B cell (primary cell): ENCODE measurements at regions of chr1 and their contacts with region 1.

Region 1: DNA sequence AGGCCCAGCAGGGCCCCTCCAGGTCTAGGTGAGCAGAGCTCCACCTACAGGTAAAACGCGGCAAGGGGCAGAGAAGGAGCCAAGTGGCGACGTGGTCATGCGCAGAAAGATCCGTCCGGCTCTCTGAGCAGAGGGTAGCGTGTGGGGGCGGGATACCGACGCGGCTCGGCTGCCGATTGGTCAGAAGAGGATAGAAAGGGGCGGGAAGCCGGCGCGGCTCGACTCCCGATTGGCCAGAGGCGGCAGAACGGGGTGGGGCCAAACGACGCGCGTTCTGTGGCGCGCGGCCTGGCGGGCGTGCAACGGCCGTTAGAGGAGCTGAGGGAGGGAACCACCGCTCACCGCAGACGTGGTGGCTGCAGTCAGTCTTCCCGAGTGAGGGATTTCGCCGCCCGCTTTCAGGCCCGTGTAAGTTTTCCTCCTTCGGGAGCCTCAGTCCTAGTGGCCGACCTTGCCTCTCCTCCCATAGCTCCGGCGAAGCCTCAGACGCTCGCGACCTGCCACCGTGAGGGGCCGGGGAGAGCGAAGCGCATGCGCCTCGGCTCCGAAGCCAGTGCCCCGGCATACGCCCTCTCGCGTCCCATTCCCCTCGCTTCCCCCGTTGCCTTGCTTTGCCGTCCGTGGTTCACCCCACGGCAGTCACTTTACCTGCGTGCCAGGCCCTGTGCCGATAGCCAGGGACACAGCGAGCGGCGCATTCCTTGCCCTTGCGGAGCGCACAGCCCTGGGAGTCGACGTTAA is at the start of gene CEP85:
- DNase-seq: peak; percentile 100
- ATAC-seq: peak; percentile 87
- H3K4me3 ChIP-seq: peak within 1 kb of the TSS; percentile 62 to 93 (median 81)
- H3K4me3 Mint-ChIP-seq: peak within 1 kb of the TSS; percentile 97
- H3K27ac ChIP-seq: peak within 1 kb of the TSS; percentile 59 to 86
- H3K27ac Mint-ChIP-seq: peak within 1 kb of the TSS; percentile 95
- H3K4me1 ChIP-seq: peaks cover 11 to 16% of the 10 kb centered on the region in 2 donors
- H3K4me1 Mint-ChIP-seq: peaks cover 27% of the 10 kb centered on the region
- H3K27me3 ChIP-seq: no peaks in the 10 kb centered on the region
- H3K27me3 Mint-ChIP-seq: no peaks in the 10 kb centered on the region
- CTCF ChIP-seq: peak; percentile 90
- total RNA-seq, gene CEP85: 16.2 and 16.9 TPM in 2 replicates

Region 2: DNA sequence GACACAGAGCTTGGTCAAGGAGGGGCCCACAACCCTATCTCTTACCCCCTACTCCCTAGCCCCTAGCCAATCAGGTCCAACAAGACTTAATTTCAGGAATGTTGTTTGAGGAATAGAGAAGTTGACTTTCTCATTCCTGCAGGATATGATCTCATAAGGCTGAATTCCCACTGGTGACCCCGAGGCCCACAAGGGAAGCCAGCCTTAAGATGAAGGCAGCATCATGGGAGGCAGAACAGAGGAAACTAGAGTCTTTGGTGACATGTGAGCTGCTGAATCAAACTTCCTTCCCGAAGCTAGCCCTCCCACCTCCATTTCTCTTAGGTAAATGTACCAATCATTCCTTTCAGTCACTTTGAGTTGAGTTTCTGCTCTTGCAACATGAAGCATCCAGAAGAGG is 131.5 kb before region 1 on chr1:
- CTCF ChIA-PET with region 1: interaction called, 4 read pairs
- POLR2A ChIA-PET with region 1: no interaction called
- intact Hi-C with region 1: loop called (anchors 1 kb)
- DNase-seq: no peak
- ATAC-seq: no peak
- H3K4me3 ChIP-seq: no peak overlapping the region
- H3K4me3 Mint-ChIP-seq: no peak overlapping the region
- H3K27ac ChIP-seq: no peak overlapping the region
- H3K27ac Mint-ChIP-seq: no peak overlapping the region
- H3K4me1 ChIP-seq: no peaks in the 10 kb centered on the region
- H3K4me1 Mint-ChIP-seq: peaks cover 4% of the 10 kb centered on the region
- H3K27me3 ChIP-seq: no peaks in the 10 kb centered on the region
- H3K27me3 Mint-ChIP-seq: peaks cover 17% of the 10 kb centered on the region
- CTCF ChIP-seq: no peak

Region 3: DNA sequence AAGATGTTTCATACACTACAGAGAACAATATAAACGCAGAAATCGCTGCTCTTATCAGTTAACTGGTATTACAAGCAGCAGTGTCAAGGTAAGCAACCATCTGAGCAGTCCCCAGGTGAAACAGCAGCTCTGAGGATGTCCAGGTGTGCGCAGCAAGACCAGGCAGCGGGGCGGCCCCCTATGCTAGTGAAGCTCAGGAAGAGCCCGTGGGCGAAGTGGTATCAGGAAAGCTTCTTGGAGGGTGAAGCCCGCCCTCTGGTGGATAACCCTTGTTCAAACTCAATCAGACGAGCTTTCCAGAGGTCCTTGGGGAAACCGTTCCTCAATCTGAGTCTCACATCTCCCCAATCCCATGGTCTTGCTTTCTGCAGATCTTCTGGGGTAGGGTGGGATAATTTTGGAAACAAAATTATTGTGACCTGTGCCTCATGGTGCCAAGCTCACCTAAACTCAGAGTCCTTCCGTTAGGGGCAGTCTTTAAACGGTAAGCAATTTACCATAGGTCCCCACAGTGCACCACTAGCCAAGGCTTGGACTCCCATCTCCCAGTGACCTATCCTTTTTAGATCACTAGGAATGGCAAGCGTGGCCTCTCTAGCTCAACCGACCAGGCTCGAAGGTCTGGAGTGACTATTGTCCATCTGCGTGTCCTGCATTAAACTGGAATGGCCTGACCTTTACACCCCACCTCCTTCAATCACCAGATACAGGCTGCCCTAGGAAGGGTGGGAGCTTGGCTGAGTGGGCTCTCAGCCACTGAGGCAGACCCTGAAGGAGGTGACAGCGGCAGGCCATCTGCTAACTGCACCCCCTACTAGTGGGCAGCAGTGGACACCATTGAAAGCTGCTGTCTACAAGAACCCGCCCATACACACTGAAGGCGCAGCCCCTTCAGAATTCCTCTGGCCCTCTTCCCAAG is 88.8 kb before region 1 on chr1:
- CTCF ChIA-PET with region 1: interaction called, 15 read pairs
- POLR2A ChIA-PET with region 1: no interaction called
- intact Hi-C with region 1: no loop called
- DNase-seq: peak; percentile 79
- ATAC-seq: peak; percentile 65
- H3K4me3 ChIP-seq: no peak overlapping the region
- H3K4me3 Mint-ChIP-seq: no peak overlapping the region
- H3K27ac ChIP-seq: no peak overlapping the region
- H3K27ac Mint-ChIP-seq: no peak overlapping the region
- H3K4me1 ChIP-seq: peaks cover 4 to 6% of the 10 kb centered on the region in 2 donors
- H3K4me1 Mint-ChIP-seq: peaks cover 3% of the 10 kb centered on the region
- H3K27me3 ChIP-seq: peaks cover 0 to 6% (median 0%) of the 10 kb centered on the region in 4 experiments
- H3K27me3 Mint-ChIP-seq: peaks cover 14% of the 10 kb centered on the region
- CTCF ChIP-seq: peak; percentile 90

Region 4: DNA sequence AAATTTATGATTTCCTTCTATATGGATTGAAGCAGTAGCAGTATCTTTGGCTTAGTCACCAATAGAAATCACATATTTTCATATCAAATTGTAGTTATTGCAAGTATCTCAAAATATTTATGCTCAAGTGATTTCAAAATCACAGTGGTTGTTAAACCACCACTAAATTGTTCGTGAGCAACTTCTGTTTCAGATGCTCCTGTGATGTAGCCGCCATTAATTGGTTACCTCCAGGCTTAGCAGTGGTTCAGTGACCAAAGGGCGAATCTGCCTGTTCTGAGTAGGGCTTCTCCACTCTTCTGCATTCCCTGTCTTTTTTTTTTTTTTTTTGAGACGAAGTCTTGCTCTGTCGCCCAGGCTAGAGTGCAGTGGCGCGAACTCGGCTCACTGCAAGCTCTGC is 58.7 kb before region 1 on chr1:
- CTCF ChIA-PET with region 1: interaction called, 28 read pairs
- POLR2A ChIA-PET with region 1: no interaction called
- intact Hi-C with region 1: no loop called
- DNase-seq: no peak
- ATAC-seq: no peak
- H3K4me3 ChIP-seq: no peak overlapping the region
- H3K4me3 Mint-ChIP-seq: no peak overlapping the region
- H3K27ac ChIP-seq: no peak overlapping the region
- H3K27ac Mint-ChIP-seq: no peak overlapping the region
- H3K4me1 ChIP-seq: peaks cover 6 to 8% of the 10 kb centered on the region in 2 donors
- H3K4me1 Mint-ChIP-seq: peaks cover 7% of the 10 kb centered on the region
- H3K27me3 ChIP-seq: no peaks in the 10 kb centered on the region
- H3K27me3 Mint-ChIP-seq: no peaks in the 10 kb centered on the region
- CTCF ChIP-seq: no peak

Region 5: GRCh38 chr1:26284597-26285360 is 50.7 kb after region 1 on chr1:
- CTCF ChIA-PET with region 1: interaction called, 13 read pairs
- POLR2A ChIA-PET with region 1: interaction called, 17 read pairs
- intact Hi-C with region 1: loop called (anchors 5 kb)
- DNase-seq: peak; percentile 87
- ATAC-seq: peak; percentile 47
- H3K4me3 ChIP-seq: peak overlapping the region in 2 of 5 experiments; percentile 5 to 19
- H3K4me3 Mint-ChIP-seq: peak overlapping the region; percentile 87
- H3K27ac ChIP-seq: peak overlapping the region; percentile 93 to 96
- H3K27ac Mint-ChIP-seq: peak overlapping the region; percentile 97
- H3K4me1 ChIP-seq: peaks cover 79 to 89% of the 10 kb centered on the region in 2 donors
- H3K4me1 Mint-ChIP-seq: peaks cover 88% of the 10 kb centered on the region
- H3K27me3 ChIP-seq: no peaks in the 10 kb centered on the region
- H3K27me3 Mint-ChIP-seq: no peaks in the 10 kb centered on the region
- CTCF ChIP-seq: peak; percentile 77

Region 6: GRCh38 chr1:26363549-26364448 is 129.7 kb after region 1 on chr1:
- CTCF ChIA-PET with region 1: interaction called, 15 read pairs
- POLR2A ChIA-PET with region 1: no interaction called
- intact Hi-C with region 1: no loop called
- DNase-seq: peak; percentile 87
- ATAC-seq: peak; percentile 82
- H3K4me3 ChIP-seq: no peak overlapping the region
- H3K4me3 Mint-ChIP-seq: no peak overlapping the region
- H3K27ac ChIP-seq: no peak overlapping the region
- H3K27ac Mint-ChIP-seq: no peak overlapping the region
- H3K4me1 ChIP-seq: peaks cover 22 to 28% of the 10 kb centered on the region in 2 donors
- H3K4me1 Mint-ChIP-seq: peaks cover 31% of the 10 kb centered on the region
- H3K27me3 ChIP-seq: peaks cover 0 to 36% (median 14%) of the 10 kb centered on the region in 4 experiments
- H3K27me3 Mint-ChIP-seq: peaks cover 28% of the 10 kb centered on the region
- CTCF ChIP-seq: peak; percentile 95

Region 7: DNA sequence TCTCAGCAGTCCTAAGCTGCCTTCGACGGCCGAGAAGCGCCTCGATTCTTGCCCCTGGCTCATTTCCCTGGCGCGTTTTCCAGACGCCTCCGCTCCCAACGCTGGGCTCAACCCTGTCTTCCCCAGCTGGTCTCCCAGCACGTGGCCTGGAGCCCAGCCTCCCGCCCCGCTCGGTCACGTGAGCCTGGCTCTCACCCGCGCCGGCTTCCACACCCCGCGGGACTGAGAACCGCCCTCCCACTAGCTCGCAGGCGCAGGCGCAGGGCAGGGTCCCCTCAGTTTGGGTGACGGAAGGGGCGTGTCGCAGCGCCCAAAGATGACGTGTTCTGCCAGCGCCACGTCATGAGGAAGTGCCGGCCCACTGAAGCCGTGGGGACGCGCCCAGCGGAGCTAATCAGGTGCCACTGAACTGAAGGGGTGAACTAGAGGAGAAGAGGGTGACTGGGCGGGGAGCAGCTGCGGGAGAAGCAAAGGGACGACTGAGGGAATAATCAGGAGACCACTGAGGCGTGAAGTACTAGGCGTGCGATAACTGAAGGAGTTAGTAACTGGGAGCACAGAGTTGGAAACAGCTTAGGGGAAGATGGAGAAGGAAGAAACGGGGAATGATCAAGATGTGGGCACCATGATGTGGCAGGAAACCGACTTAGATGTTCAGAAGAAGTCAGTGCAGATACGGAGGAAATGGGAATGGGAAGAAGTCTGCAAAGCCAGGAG is 198.1 kb after region 1 on chr1 and contains the start of gene DHDDS:
- CTCF ChIA-PET with region 1: interaction called, 5 read pairs
- POLR2A ChIA-PET with region 1: no interaction called
- intact Hi-C with region 1: loop called (anchors 1 kb)
- DNase-seq: peak; percentile 99
- ATAC-seq: peak; percentile 97
- H3K4me3 ChIP-seq: peak within 1 kb of the TSS; percentile 62 to 97 (median 77)
- H3K4me3 Mint-ChIP-seq: peak within 1 kb of the TSS; percentile 95
- H3K27ac ChIP-seq: peak within 1 kb of the TSS; percentile 61 to 86
- H3K27ac Mint-ChIP-seq: peak within 1 kb of the TSS; percentile 93
- H3K4me1 ChIP-seq: peaks cover 15 to 21% of the 10 kb centered on the region in 2 donors
- H3K4me1 Mint-ChIP-seq: peaks cover 20% of the 10 kb centered on the region
- H3K27me3 ChIP-seq: no peaks in the 10 kb centered on the region
- H3K27me3 Mint-ChIP-seq: no peaks in the 10 kb centered on the region
- CTCF ChIP-seq: no peak
- total RNA-seq, gene DHDDS: 54.2 and 61.7 TPM in 2 replicates

Region 8: GRCh38 chr1:26555550-26556510 is 321.8 kb after region 1 on chr1:
- CTCF ChIA-PET with region 1: no interaction called
- POLR2A ChIA-PET with region 1: no interaction called
- intact Hi-C with region 1: no loop called
- DNase-seq: no peak
- ATAC-seq: no peak
- H3K4me3 ChIP-seq: no peak overlapping the region
- H3K4me3 Mint-ChIP-seq: no peak overlapping the region
- H3K27ac ChIP-seq: no peak overlapping the region
- H3K27ac Mint-ChIP-seq: no peak overlapping the region
- H3K4me1 ChIP-seq: no peaks in the 10 kb centered on the region
- H3K4me1 Mint-ChIP-seq: no peaks in the 10 kb centered on the region
- H3K27me3 ChIP-seq: no peaks in the 10 kb centered on the region
- H3K27me3 Mint-ChIP-seq: no peaks in the 10 kb centered on the region
- CTCF ChIP-seq: no peak

Region 9: GRCh38 chr1:26597629-26598039 is 363.6 kb after region 1 on chr1:
- CTCF ChIA-PET with region 1: no interaction called
- POLR2A ChIA-PET with region 1: no interaction called
- intact Hi-C with region 1: no loop called
- DNase-seq: peak; percentile 78
- ATAC-seq: peak; percentile 73
- H3K4me3 ChIP-seq: no peak overlapping the region
- H3K4me3 Mint-ChIP-seq: no peak overlapping the region
- H3K27ac ChIP-seq: no peak overlapping the region
- H3K27ac Mint-ChIP-seq: no peak overlapping the region
- H3K4me1 ChIP-seq: peaks cover 0 to 5% of the 10 kb centered on the region in 2 donors
- H3K4me1 Mint-ChIP-seq: peaks cover 7% of the 10 kb centered on the region
- H3K27me3 ChIP-seq: no peaks in the 10 kb centered on the region
- H3K27me3 Mint-ChIP-seq: no peaks in the 10 kb centered on the region
- CTCF ChIP-seq: peak; percentile 88